Left ventricle myocardium inferior (tissue), 1 donor: ENCODE measurements at regions of chr7 and their contacts with region 1.

Region 1: DNA sequence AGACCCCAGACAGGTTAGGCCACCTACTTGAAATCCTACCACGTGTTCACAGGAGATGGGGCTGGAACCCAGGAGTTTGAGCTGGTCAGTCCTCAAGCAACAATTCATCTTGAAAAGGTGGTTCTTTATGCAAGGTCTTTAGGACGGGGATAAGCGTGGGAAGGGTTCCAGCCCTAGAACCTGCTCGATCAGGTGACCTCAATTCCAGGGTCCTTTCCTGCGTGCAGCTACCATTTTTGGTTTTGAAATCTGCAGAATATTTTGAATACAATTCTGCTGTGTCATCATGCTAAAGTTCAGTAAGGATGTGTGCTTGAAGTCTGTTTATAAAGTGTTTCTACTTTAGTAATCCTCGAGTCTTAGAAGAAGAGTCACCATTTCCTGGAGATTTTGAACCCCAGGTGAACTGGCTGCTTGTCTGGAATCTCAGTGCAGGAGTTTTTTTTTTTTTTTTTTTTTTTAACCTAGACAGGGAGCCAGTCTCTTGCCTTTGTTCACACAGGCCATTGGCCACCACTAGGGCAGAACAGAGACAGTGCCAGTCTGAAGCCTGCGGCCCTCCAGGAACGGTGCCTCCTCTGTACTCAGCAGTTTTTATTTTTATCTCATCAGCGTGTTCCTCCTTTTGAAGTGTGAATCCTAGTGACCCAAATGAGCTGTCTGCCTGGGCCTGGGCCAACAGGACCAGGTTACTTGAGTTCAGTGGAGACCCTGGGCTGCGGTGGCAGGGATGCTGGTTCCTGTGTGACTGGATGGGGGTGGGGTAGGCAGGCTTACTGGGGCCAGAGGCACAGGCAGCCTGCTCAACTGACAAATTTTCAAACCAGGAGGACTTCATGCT is 54.6 kb downstream of the EEPD1 start:
- DNase-seq: peak; percentile 54
- H3K4me3 ChIP-seq: no peak overlapping the region
- H3K27ac ChIP-seq: peak overlapping the region; percentile 35
- H3K4me1 ChIP-seq: peaks cover 82% of the 10 kb centered on the region
- H3K27me3 ChIP-seq: no peaks in the 10 kb centered on the region
- CTCF ChIP-seq: peak; percentile 46

Region 2: GRCh38 chr7:36279200-36279925 is 71.7 kb after region 1 on chr7:
- intact Hi-C with region 1: loop called (anchors 10 kb)
- DNase-seq: no peak
- H3K4me3 ChIP-seq: no peak overlapping the region
- H3K27ac ChIP-seq: peak overlapping the region; percentile 79
- H3K4me1 ChIP-seq: peaks cover 81% of the 10 kb centered on the region
- H3K27me3 ChIP-seq: no peaks in the 10 kb centered on the region
- CTCF ChIP-seq: no peak